ENCODE measurements at regions of chr12 and their contacts with region 1.

Region 1: DNA sequence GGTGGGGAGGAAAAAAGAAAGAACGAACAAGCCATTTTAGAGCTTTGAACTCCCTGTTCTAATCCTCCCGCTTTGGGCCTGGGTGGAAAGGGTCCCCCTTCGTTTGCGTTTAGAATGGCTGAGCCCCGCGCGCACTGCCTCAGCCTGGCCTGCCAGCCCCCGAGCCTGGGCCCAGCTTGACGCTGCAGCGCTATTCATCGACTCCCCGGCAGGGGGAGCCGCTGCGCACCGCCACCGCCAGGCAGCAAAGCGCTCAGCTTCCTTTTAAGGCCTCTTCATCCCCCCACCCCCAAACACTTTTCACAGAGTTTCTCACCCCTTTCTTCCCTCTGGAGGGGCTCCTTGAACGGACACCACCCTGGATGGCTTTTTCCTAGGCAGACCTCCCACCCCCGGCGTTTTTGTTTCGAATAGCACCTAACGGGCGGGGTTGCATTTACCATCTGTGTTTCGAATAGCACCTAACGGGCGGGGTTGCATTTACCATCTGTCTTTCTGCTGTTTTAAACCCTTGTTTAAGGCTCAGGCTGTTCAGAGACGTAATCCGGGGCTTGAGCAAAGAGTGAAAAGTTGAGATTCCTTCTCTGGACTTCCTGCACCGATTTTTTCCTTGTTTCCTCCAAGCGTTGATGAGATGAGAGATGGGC is 56.4 kb upstream of the PIWIL1 start:
- DNase-seq: peak; percentile 29 to 95
- H3K4me3 ChIP-seq: no peak overlapping the region
- H3K27ac ChIP-seq: no peak overlapping the region
- H3K4me1 ChIP-seq: 0 out of 7 replicates have a peak, but pooled peaks cover 0 to 2% (median 0%) of the 10 kb centered on the region in 4 experiments
- H3K27me3 ChIP-seq: peaks cover 0 to 2% (median 0%) of the 10 kb centered on the region in 4 experiments; a peak in 2 of 7 replicates
- CTCF ChIP-seq: peak; percentile 87 to 95 (median 89)
- EP300 ChIP-seq: no peak
- POLR2A ChIP-seq: no peak
- RAD21 ChIP-seq: peak; percentile 59 to 73

Region 2: GRCh38 chr12:130049666-130050065 is 231.6 kb before region 1 on chr12:
- CTCF ChIA-PET with region 1: interaction called, 11 read pairs
- POLR2A ChIA-PET with region 1: no interaction called
- DNase-seq: no peak
- H3K4me3 ChIP-seq: no peak overlapping the region
- H3K27ac ChIP-seq: no peak overlapping the region
- H3K4me1 ChIP-seq: peaks cover 0 to 7% (median 3%) of the 10 kb centered on the region in 4 experiments; a peak in 5 of 7 replicates
- H3K27me3 ChIP-seq: peaks cover 10 to 67% (median 50%) of the 10 kb centered on the region in 4 experiments
- CTCF ChIP-seq: peak; percentile 42 to 48 (median 47)
- EP300 ChIP-seq: no peak
- POLR2A ChIP-seq: no peak
- RAD21 ChIP-seq: peak; percentile 41 to 58

Region 3: GRCh38 chr12:130254461-130255276 is 26.6 kb before region 1 on chr12:
- CTCF ChIA-PET with region 1: interaction called, 14 read pairs
- POLR2A ChIA-PET with region 1: no interaction called
- DNase-seq: no peak
- H3K4me3 ChIP-seq: no peak overlapping the region
- H3K27ac ChIP-seq: no peak overlapping the region
- H3K4me1 ChIP-seq: no peaks in the 10 kb centered on the region
- H3K27me3 ChIP-seq: peaks cover 0 to under 1% (median 0%) of the 10 kb centered on the region in 4 experiments; a peak in 4 of 7 replicates
- CTCF ChIP-seq: no peak
- EP300 ChIP-seq: no peak
- POLR2A ChIP-seq: no peak
- RAD21 ChIP-seq: no peak

Region 4: GRCh38 chr12:130316251-130316650 is 35.0 kb after region 1 on chr12:
- CTCF ChIA-PET with region 1: interaction called, 10 read pairs
- POLR2A ChIA-PET with region 1: no interaction called
- DNase-seq: no peak
- H3K4me3 ChIP-seq: no peak overlapping the region
- H3K27ac ChIP-seq: no peak overlapping the region
- H3K4me1 ChIP-seq: no peaks in the 10 kb centered on the region
- H3K27me3 ChIP-seq: peaks cover 0 to 1% (median under 1%) of the 10 kb centered on the region in 4 experiments; a peak in 3 of 7 replicates
- CTCF ChIP-seq: no peak
- EP300 ChIP-seq: no peak
- POLR2A ChIP-seq: no peak
- RAD21 ChIP-seq: no peak